Sciatic nerve (tissue), 2 donors: ENCODE measurements at regions of chr6 and their contacts with region 1.

Region 1: DNA sequence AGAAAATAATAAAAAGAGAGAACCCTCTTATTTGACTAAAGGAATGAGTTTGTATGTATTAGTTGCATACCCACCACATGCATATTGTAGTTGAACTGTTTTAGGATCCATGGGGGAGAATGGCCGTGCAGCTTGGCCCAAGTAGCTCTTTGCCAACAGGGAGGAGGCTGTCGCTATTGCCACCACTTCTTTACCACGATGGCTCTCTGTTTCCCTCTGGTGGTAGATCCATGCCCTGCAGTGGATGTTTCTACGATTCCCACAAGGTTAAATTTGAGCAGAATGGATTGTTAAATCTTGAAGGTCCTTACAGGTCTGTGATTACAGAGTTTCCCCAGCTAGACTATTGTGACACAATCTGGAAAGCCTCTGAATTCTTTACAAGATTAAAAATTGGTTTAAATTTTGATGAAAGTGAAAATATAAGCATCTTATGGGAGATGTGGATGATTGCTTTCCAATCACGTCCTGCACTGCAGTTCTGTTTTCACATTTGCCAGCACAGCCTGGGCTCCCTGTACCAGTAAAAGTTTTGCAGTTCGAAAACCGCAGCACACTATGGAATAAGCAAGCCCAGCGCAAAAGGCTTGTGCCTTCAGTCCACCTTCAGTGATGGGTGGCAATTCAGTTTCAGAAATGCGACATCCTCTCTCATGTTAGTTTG is 34.4 kb upstream of the FNDC1 start:
- DNase-seq: peak; percentile 78
- ATAC-seq: peak; percentile 77

Region 2: GRCh38 chr6:159042003-159042825 is 92.6 kb before region 1 on chr6:
- intact Hi-C with region 1: loop called (anchors 10 kb)
- DNase-seq: no peak
- ATAC-seq: peak; percentile 67